Endothelial cell of umbilical vein (primary cell): ENCODE measurements at regions of chr12 and their contacts with region 1.

Region 1: GRCh38 chr12:101773650-101774162 is 34.4 kb upstream of the SYCP3 start:
- DNase-seq: peak; percentile 71
- H3K4me3 ChIP-seq: no peak overlapping the region
- H3K27ac ChIP-seq: no peak overlapping the region
- H3K4me1 ChIP-seq: no peaks in the 10 kb centered on the region
- H3K27me3 ChIP-seq: no peaks in the 10 kb centered on the region
- CTCF ChIP-seq: peak; percentile 73 to 84
- POLR2A ChIP-seq: no peak

Region 2: GRCh38 chr12:101414533-101415119 is 359.1 kb before region 1 on chr12:
- CTCF ChIA-PET with region 1: interaction called, 10 read pairs
- POLR2A ChIA-PET with region 1: no interaction called
- dilution Hi-C with region 1: no loop called
- intact Hi-C with region 1: loop called (anchors 1 kb)
- DNase-seq: peak; percentile 76
- H3K4me3 ChIP-seq: no peak overlapping the region
- H3K27ac ChIP-seq: no peak overlapping the region
- H3K4me1 ChIP-seq: no peaks in the 10 kb centered on the region
- H3K27me3 ChIP-seq: peaks cover 0 to 4% of the 10 kb centered on the region in 2 experiments
- CTCF ChIP-seq: peak; percentile 30 to 39
- POLR2A ChIP-seq: no peak

Region 3: GRCh38 chr12:101747697-101748096 is 26.0 kb before region 1 on chr12:
- CTCF ChIA-PET with region 1: no interaction called
- POLR2A ChIA-PET with region 1: no interaction called
- dilution Hi-C with region 1: no loop called
- intact Hi-C with region 1: no loop called
- DNase-seq: no peak
- H3K4me3 ChIP-seq: no peak overlapping the region
- H3K27ac ChIP-seq: no peak overlapping the region
- H3K4me1 ChIP-seq: no peaks in the 10 kb centered on the region
- H3K27me3 ChIP-seq: no peaks in the 10 kb centered on the region
- CTCF ChIP-seq: no peak
- POLR2A ChIP-seq: no peak

Region 4: GRCh38 chr12:101759396-101760047 is 14.2 kb before region 1 on chr12:
- CTCF ChIA-PET with region 1: interaction called, 33 read pairs
- POLR2A ChIA-PET with region 1: no interaction called
- dilution Hi-C with region 1: no loop called
- intact Hi-C with region 1: no loop called
- DNase-seq: peak; percentile 33
- H3K4me3 ChIP-seq: no peak overlapping the region
- H3K27ac ChIP-seq: no peak overlapping the region
- H3K4me1 ChIP-seq: no peaks in the 10 kb centered on the region
- H3K27me3 ChIP-seq: no peaks in the 10 kb centered on the region
- CTCF ChIP-seq: peak; percentile 53 to 64
- POLR2A ChIP-seq: no peak

Region 5: DNA sequence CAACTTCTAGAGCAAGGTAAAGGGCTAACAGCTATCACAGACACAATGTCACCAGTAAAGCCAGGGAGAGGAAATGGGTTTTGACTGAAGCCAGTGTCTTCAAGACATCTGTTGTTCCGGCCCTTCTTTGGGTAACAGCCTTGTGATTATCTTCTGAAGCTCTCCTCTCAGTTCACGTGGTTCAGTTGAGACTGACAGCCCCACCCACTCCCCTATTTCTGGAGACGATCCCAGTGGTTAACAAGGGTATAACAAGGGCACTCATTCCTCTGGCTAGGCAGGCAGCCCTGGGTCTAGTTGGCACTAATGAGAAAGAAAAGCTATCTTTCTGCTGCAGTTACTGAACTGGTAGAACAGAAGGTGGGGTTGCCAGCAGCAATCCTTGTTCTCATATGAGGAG is 50.2 kb after region 1 on chr12:
- CTCF ChIA-PET with region 1: interaction called, 121 read pairs
- POLR2A ChIA-PET with region 1: interaction called, 5 read pairs
- dilution Hi-C with region 1: no loop called
- intact Hi-C with region 1: no loop called
- DNase-seq: peak; percentile 18
- H3K4me3 ChIP-seq: no peak overlapping the region
- H3K27ac ChIP-seq: no peak overlapping the region
- H3K4me1 ChIP-seq: peaks cover 5% of the 10 kb centered on the region
- H3K27me3 ChIP-seq: no peaks in the 10 kb centered on the region
- CTCF ChIP-seq: peak; percentile 10 to 13
- POLR2A ChIP-seq: no peak

Region 6: DNA sequence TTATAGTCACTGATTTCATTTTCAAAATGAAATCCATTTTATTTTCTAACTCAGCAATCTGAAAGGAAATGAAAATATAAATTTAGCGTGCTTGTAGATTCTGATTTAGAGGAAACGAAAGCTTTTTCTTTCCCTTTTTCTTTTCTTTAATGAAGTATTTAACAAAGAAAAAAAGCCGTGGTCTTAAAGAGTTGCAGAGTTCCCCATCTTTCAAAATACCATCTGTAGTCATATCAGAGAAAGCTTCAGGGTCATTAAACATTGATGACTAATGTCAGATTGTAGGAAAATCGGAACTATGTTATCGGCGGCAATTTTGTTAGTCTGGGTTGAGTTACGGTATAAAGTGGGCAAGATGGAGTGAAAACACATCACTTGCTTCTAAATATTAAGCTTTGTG is 135.9 kb after region 1 on chr12:
- CTCF ChIA-PET with region 1: interaction called, 12 read pairs
- POLR2A ChIA-PET with region 1: no interaction called
- dilution Hi-C with region 1: no loop called
- intact Hi-C with region 1: no loop called
- DNase-seq: no peak
- H3K4me3 ChIP-seq: peak overlapping the region in 1 of 3 experiments; percentile 3
- H3K27ac ChIP-seq: no peak overlapping the region
- H3K4me1 ChIP-seq: no peaks in the 10 kb centered on the region
- H3K27me3 ChIP-seq: no peaks in the 10 kb centered on the region
- CTCF ChIP-seq: no peak
- POLR2A ChIP-seq: no peak

Region 7: DNA sequence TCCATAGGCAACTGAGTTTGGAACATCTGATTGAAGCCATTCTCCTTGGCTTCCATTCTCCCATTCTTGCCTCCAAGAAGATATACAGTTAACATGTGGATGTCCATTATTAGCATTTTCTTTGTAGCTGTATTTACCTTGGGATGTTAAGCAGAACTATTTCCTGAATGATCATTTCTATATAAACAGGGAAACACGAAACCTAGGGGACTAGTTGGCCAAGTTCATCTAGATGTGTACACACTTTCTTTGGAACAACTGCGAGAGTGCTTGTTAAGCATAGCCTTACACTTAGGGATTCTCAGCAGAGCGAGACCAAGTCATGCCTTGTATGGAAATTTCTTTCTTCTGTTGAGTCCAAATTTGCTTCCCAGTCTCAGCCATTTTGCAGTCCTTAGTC is 145.7 kb after region 1 on chr12:
- CTCF ChIA-PET with region 1: interaction called, 12 read pairs
- POLR2A ChIA-PET with region 1: no interaction called
- dilution Hi-C with region 1: no loop called
- intact Hi-C with region 1: loop called (anchors 1 kb)
- DNase-seq: no peak
- H3K4me3 ChIP-seq: no peak overlapping the region
- H3K27ac ChIP-seq: no peak overlapping the region
- H3K4me1 ChIP-seq: no peaks in the 10 kb centered on the region
- H3K27me3 ChIP-seq: no peaks in the 10 kb centered on the region
- CTCF ChIP-seq: no peak
- POLR2A ChIP-seq: no peak

Region 8: GRCh38 chr12:102119674-102120563 is 346.2 kb after region 1 on chr12 and contains the starts of genes NUP37 and PARPBP:
- CTCF ChIA-PET with region 1: no interaction called
- POLR2A ChIA-PET with region 1: no interaction called
- dilution Hi-C with region 1: no loop called
- intact Hi-C with region 1: loop called (anchors 10 kb)
- DNase-seq: peak; percentile 93
- H3K4me3 ChIP-seq: peak within 1 kb of the TSS; percentile 67 to 96 (median 89)
- H3K27ac ChIP-seq: peak within 1 kb of the TSS; percentile 73
- H3K4me1 ChIP-seq: peaks cover 17% of the 10 kb centered on the region
- H3K27me3 ChIP-seq: no peaks in the 10 kb centered on the region
- CTCF ChIP-seq: no peak
- POLR2A ChIP-seq: peak; percentile 91
- total RNA-seq, gene NUP37: 41.3 and 46.8 TPM in 2 replicates
- total RNA-seq, gene PARPBP: 19.0 and 19.6 TPM in 2 replicates